B cell (primary cell): ENCODE measurements at regions of chr1 and their contacts with region 1.

Region 1: GRCh38 chr1:112955781-112956543 is at the start of gene SLC16A1:
- DNase-seq: peak; percentile 94
- ATAC-seq: peak; percentile 84
- H3K4me3 ChIP-seq: peak within 1 kb of the TSS; percentile 53 to 97 (median 88)
- H3K4me3 Mint-ChIP-seq: peak within 1 kb of the TSS; percentile 99
- H3K27ac ChIP-seq: peak within 1 kb of the TSS; percentile 88 to 92
- H3K27ac Mint-ChIP-seq: peak within 1 kb of the TSS; percentile 99
- H3K4me1 ChIP-seq: peaks cover 26 to 30% of the 10 kb centered on the region in 2 donors
- H3K4me1 Mint-ChIP-seq: peaks cover 48% of the 10 kb centered on the region
- H3K27me3 ChIP-seq: no peaks in the 10 kb centered on the region
- H3K27me3 Mint-ChIP-seq: no peaks in the 10 kb centered on the region
- CTCF ChIP-seq: no peak
- total RNA-seq, gene SLC16A1: 13.0 and 15.8 TPM in 2 replicates

Region 2: GRCh38 chr1:111619635-111620440 is 1336.1 kb before region 1 on chr1 and contains the start of gene RAP1A:
- CTCF ChIA-PET with region 1: no interaction called
- POLR2A ChIA-PET with region 1: no interaction called
- intact Hi-C with region 1: loop called (anchors 5 kb)
- DNase-seq: peak; percentile 91
- ATAC-seq: peak; percentile 79
- H3K4me3 ChIP-seq: peak within 1 kb of the TSS; percentile 63 to 94 (median 78)
- H3K4me3 Mint-ChIP-seq: peak within 1 kb of the TSS; percentile 98
- H3K27ac ChIP-seq: peak within 1 kb of the TSS; percentile 73 to 86
- H3K27ac Mint-ChIP-seq: peak within 1 kb of the TSS; percentile 94
- H3K4me1 ChIP-seq: peaks cover 73 to 79% of the 10 kb centered on the region in 2 donors
- H3K4me1 Mint-ChIP-seq: peaks cover 75% of the 10 kb centered on the region
- H3K27me3 ChIP-seq: no peaks in the 10 kb centered on the region
- H3K27me3 Mint-ChIP-seq: no peaks in the 10 kb centered on the region
- CTCF ChIP-seq: no peak
- total RNA-seq, gene RAP1A: 74.6 and 75.3 TPM in 2 replicates

Region 3: DNA sequence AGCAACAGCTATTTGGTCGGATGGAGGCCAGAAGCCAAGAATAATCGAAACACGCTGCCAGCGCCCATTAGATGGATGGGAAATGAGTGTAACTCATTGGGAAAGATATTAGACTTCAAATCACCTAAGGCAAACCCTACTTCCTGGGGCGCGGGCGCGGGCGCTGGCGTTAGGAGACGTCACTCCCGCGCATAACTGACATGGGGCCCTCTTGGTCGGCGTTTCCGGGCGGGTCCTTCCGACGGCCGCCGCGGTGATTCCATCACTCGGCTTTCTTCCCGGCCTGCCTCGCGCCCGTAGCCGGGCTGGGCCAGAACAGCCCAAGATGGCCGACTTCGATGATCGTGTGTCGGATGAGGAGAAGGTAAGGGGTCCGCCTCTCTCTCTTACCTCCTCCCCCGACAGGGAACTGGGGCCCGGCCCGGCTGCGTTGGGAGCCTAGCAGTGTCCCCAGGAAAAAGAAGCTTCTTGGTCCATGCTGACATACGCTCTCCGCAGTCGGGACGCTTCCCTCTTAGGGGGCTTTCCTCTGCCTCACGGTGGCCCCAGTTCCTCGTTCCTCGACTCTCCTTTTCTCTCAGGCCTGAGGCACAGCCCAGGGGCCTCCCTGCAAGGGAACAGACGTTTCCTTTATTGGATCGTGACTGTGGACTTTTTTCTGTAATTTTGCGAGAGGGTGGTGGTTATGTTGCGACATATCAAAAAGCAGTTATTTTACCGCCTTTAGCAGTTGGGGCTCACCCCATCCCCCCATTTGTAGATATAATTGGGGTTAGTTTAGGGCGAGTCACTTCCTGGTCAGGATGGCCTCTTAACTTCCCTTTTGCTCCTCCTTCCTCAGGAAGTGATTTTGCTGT is 336.2 kb before region 1 on chr1 and contains the start of gene CAPZA1:
- CTCF ChIA-PET with region 1: no interaction called
- POLR2A ChIA-PET with region 1: no interaction called
- intact Hi-C with region 1: loop called (anchors 5 kb)
- DNase-seq: peak; percentile 95
- ATAC-seq: peak; percentile 85
- H3K4me3 ChIP-seq: peak within 1 kb of the TSS; percentile 69 to 97 (median 91)
- H3K4me3 Mint-ChIP-seq: peak within 1 kb of the TSS; percentile 97
- H3K27ac ChIP-seq: peak within 1 kb of the TSS; percentile 94 to 99
- H3K27ac Mint-ChIP-seq: peak within 1 kb of the TSS; percentile 99
- H3K4me1 ChIP-seq: peaks cover 37 to 42% of the 10 kb centered on the region in 2 donors
- H3K4me1 Mint-ChIP-seq: peaks cover 46% of the 10 kb centered on the region
- H3K27me3 ChIP-seq: no peaks in the 10 kb centered on the region
- H3K27me3 Mint-ChIP-seq: no peaks in the 10 kb centered on the region
- CTCF ChIP-seq: no peak
- total RNA-seq, gene CAPZA1: 172 and 182 TPM in 2 replicates

Region 4: GRCh38 chr1:112882271-112882744 is 73.7 kb before region 1 on chr1:
- CTCF ChIA-PET with region 1: interaction called, 4 read pairs
- POLR2A ChIA-PET with region 1: no interaction called
- intact Hi-C with region 1: loop called (anchors 1 kb)
- DNase-seq: no peak
- ATAC-seq: no peak
- H3K4me3 ChIP-seq: no peak overlapping the region
- H3K4me3 Mint-ChIP-seq: no peak overlapping the region
- H3K27ac ChIP-seq: no peak overlapping the region
- H3K27ac Mint-ChIP-seq: no peak overlapping the region
- H3K4me1 ChIP-seq: no peaks in the 10 kb centered on the region
- H3K4me1 Mint-ChIP-seq: no peaks in the 10 kb centered on the region
- H3K27me3 ChIP-seq: peaks cover 0 to 5% (median 0%) of the 10 kb centered on the region in 4 experiments
- H3K27me3 Mint-ChIP-seq: peaks cover 7% of the 10 kb centered on the region
- CTCF ChIP-seq: no peak

Region 5: DNA sequence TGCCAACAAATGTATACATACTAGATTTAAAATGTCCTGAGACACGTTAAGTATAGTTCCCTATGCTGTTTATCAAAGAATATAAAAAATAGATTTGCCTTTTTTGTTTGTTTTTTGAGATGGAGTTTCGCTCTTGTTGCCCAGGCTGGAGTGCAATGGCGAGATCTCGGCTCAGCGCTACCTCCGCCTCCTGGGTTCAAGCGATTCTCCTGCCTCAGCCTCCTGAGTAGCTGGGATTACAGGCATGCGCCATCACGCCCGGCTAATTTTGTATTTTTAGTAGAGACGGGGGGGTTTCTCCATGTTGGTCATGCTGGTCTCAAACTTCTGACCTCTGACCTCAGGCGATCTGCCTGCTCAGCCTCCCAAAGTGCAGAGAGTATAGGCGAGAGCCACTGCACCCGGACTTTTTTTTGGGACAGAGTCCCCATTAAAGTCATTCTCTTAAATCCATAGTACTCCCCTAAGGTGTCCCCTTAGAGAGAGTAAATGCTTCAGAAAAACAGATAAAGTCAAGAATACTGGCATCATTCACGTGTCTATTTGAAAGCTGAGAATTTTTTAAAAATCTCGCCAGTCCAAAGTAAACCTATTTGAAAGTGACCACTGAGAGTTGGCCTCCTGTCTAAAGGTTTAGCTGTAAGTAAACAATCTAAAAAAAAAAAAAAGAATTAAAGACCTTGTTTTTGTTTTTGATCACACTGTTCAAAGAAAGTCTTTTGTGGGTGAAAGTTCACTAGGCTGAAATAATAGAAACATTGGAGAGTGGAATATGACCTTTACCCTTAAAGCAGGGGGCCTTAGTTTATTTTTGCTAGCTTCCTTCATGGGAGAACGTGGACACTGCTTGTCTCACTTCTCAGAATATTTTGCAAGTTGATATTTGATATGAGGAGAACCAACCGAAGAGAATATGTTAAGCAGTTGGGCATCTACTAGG is 48.1 kb after region 1 on chr1:
- CTCF ChIA-PET with region 1: no interaction called
- POLR2A ChIA-PET with region 1: no interaction called
- intact Hi-C with region 1: no loop called
- DNase-seq: no peak
- ATAC-seq: no peak
- H3K4me3 ChIP-seq: no peak overlapping the region
- H3K4me3 Mint-ChIP-seq: no peak overlapping the region
- H3K27ac ChIP-seq: no peak overlapping the region
- H3K27ac Mint-ChIP-seq: no peak overlapping the region
- H3K4me1 ChIP-seq: no peaks in the 10 kb centered on the region
- H3K4me1 Mint-ChIP-seq: no peaks in the 10 kb centered on the region
- H3K27me3 ChIP-seq: no peaks in the 10 kb centered on the region
- H3K27me3 Mint-ChIP-seq: no peaks in the 10 kb centered on the region
- CTCF ChIP-seq: no peak

Region 6: DNA sequence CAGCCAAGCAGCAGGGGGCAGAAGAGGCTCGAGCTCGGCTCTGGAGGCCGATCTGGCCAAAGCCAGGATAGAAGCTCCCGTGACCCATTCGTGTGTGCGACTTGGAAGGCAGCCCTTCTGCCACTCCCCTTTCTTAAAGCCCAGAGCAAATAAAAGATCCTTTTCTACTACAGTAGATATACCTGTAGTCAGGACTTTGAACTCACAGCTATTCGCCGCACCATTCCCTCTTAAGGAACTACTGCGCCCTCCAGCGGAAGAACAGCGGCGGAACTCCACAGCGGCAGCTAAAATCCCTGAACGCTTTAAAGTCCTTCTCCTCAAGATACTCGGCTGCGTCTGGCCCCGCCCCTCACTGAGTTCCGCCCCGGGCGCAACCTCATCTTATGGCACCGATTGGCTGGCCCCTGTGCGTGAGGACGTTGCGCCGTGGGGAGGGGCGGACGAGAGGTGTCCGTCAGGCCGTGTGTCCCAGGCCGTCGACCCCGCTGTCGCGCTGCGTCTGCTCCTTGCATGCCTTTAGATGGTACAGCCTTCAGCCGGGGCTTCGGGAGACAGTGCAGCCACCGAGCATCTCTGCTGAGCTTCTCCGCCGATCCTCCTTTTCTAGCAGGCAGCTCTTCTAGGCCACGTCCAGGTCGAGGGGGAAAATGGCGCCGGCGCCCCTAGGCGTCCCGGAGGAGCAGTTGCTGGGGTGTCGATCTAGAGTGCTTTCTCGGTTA is 117.0 kb after region 1 on chr1 and contains the start of gene LRIG2:
- CTCF ChIA-PET with region 1: interaction called, 12 read pairs
- POLR2A ChIA-PET with region 1: no interaction called
- intact Hi-C with region 1: loop called (anchors 2 kb)
- DNase-seq: peak; percentile 97
- ATAC-seq: peak; percentile 96
- H3K4me3 ChIP-seq: peak within 1 kb of the TSS; percentile 74 to 94 (median 87)
- H3K4me3 Mint-ChIP-seq: peak within 1 kb of the TSS; percentile 99
- H3K27ac ChIP-seq: peak within 1 kb of the TSS; percentile 74 to 77
- H3K27ac Mint-ChIP-seq: peak within 1 kb of the TSS; percentile 97
- H3K4me1 ChIP-seq: peaks cover 15 to 18% of the 10 kb centered on the region in 2 donors
- H3K4me1 Mint-ChIP-seq: peaks cover 33% of the 10 kb centered on the region
- H3K27me3 ChIP-seq: no peaks in the 10 kb centered on the region
- H3K27me3 Mint-ChIP-seq: no peaks in the 10 kb centered on the region
- CTCF ChIP-seq: peak; percentile 95
- total RNA-seq, gene LRIG2: 30.6 and 32.2 TPM in 2 replicates

Region 7: DNA sequence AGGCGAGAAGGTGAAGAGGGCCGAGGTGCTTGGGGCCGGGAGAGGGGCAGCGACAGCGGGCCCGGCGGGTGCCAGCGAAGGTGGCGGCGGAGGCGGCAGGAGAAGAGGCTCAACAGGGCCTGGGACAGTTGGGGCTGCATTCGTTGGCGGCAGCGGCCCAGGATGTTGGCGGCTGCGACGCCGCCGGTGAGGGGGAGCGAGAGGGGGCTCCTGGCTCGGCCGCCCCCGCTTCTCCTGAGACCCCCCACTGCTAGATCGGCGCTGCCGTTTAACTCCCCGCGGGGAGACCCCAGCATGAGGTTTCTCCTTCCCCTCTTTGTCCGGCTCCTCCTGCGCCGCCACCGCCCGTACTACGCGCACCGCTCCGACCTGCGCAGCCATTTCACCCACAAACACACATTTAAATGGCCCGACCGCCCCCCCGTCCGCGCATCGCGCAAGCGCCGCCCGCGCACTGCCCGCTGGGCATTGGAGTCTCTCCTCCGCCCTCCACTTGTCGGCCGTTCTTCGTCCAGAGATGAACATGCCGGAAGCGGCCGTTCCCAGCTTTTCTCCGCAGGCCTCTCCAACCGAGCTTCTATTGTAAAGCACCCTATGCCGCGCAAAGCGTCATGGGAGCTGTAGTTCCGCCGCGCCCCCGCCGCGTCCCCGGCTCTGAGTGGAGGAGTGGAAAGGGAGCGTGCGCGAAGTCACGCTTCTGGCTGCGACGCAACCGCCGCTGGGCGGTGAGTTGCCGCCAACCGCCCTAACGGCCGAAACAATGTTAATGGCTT is 856.1 kb after region 1 on chr1 and contains the start of gene RSBN1:
- CTCF ChIA-PET with region 1: no interaction called
- POLR2A ChIA-PET with region 1: no interaction called
- intact Hi-C with region 1: loop called (anchors 5 kb)
- DNase-seq: peak; percentile 99
- ATAC-seq: peak; percentile 94
- H3K4me3 ChIP-seq: peak within 1 kb of the TSS; percentile 78 to 91 (median 83)
- H3K4me3 Mint-ChIP-seq: peak within 1 kb of the TSS; percentile 98
- H3K27ac ChIP-seq: peak within 1 kb of the TSS; percentile 86 to 93
- H3K27ac Mint-ChIP-seq: peak within 1 kb of the TSS; percentile 98
- H3K4me1 ChIP-seq: peaks cover 27 to 28% of the 10 kb centered on the region in 2 donors
- H3K4me1 Mint-ChIP-seq: peaks cover 39% of the 10 kb centered on the region
- H3K27me3 ChIP-seq: no peaks in the 10 kb centered on the region
- H3K27me3 Mint-ChIP-seq: no peaks in the 10 kb centered on the region
- CTCF ChIP-seq: peak; percentile 2
- total RNA-seq, gene RSBN1: 40.2 and 41.5 TPM in 2 replicates

Region 8: GRCh38 chr1:114511032-114511785 is 1555.2 kb after region 1 on chr1 and contains the start of gene TRIM33:
- CTCF ChIA-PET with region 1: no interaction called
- POLR2A ChIA-PET with region 1: no interaction called
- intact Hi-C with region 1: loop called (anchors 2 kb)
- DNase-seq: peak; percentile 97
- ATAC-seq: peak; percentile 75
- H3K4me3 ChIP-seq: peak within 1 kb of the TSS; percentile 67 to 98 (median 95)
- H3K4me3 Mint-ChIP-seq: peak within 1 kb of the TSS; percentile 91
- H3K27ac ChIP-seq: peak within 1 kb of the TSS; percentile 98 to 100
- H3K27ac Mint-ChIP-seq: peak within 1 kb of the TSS; percentile 98
- H3K4me1 ChIP-seq: peaks cover 36 to 41% of the 10 kb centered on the region in 2 donors
- H3K4me1 Mint-ChIP-seq: peaks cover 50% of the 10 kb centered on the region
- H3K27me3 ChIP-seq: no peaks in the 10 kb centered on the region
- H3K27me3 Mint-ChIP-seq: no peaks in the 10 kb centered on the region
- CTCF ChIP-seq: no peak
- total RNA-seq, gene TRIM33: 61.0 and 67.3 TPM in 2 replicates